Activated T-helper 1 cell treated with anti-CD3 and anti-CD28 coated beads, Interleukin-12 subunit alpha, Interleukin-12 subunit beta, Interleukin-2, Interleukin-4 antibody, amounts not matched to agents 30 ng/mL and 10 ng/mL and 1 ng/mL, durations not matched to agents 14 hours and 24 hours and 36 hours (primary cell): ENCODE measurements at regions of chr10 and their contacts with region 1.

Region 1: DNA sequence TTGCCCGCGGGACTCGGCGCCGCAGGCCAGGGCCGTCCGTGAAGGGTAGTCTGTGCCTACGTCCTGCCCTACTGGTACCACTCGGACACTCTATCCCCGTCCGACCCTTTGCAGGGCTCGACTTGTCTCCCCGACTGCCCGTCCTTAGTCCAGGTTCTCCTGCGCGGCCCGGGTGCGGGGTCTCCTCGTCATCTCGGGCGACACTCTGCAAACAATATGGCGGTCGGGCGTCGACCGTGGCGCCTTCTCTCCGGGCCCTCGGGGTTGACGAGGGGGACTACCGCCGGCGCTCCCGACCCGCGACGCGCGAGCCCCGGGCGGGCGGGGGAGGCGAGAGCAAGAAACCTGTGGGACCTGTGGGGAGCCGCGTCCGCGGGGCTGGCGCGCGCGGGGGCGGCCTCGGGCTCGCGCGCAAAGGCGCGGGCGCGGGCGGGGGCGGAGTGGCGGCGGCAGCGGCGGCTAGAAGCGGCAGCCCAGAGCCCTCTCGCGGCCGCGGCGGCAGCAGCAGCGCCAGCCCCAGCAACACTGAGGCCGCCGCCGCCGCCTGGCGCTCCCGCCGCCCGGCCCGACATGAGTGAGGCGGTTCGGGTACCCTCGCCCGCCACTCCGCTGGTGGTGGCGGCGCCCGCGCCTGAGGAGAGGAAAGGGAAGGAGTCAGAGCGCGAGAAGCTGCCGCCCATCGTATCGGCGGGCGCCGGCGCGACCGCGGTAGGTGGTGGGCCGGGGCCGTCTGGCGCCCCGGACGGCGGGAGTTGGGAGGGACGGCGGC is at the start of gene HECTD2:
- DNase-seq: peak; percentile 75
- H3K4me3 Mint-ChIP-seq: peak within 1 kb of the TSS; percentile 91
- H3K27ac Mint-ChIP-seq: peak within 1 kb of the TSS; percentile 95
- H3K4me1 Mint-ChIP-seq: peaks cover 25% of the 10 kb centered on the region
- H3K27me3 Mint-ChIP-seq: peaks cover 11% of the 10 kb centered on the region
- total RNA-seq, gene HECTD2: 6.2 and 6.4 TPM in 2 replicates

Region 2: DNA sequence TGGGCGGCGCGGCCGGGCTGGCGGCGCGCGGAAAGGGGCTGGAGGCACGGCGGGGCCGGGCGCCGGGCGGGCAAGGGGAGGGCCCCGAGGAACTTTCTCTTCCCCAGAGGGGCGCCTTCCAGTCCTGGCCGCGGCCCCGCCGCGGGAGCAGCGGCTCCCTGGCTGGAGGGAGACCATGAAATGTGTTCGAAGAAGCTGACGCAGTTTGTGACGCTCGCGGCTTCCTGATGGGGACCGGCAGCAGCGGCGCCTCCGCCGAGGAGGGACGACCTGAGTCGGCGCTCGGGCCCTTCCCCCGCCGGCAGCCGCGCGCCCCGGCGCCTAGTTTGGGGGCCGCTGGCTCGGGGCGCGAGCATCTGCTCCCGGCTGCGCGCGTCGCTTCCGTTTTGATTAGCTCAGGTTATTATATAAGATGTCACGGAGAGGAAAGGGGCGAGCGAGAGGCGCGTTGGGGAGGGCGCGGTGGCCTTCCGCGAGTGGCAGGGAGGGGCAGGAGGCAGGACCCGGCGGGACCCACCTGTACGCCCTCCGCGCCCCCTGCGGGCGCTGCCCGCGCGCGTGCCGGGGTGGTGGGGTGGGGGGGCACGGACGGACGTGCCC is 246.7 kb before region 1 on chr10:
- intact Hi-C with region 1: loop called (anchors 2 kb)
- DNase-seq: peak; percentile 66
- H3K4me3 Mint-ChIP-seq: peak overlapping the region; percentile 90
- H3K27ac Mint-ChIP-seq: peak overlapping the region; percentile 90
- H3K4me1 Mint-ChIP-seq: peaks cover 39% of the 10 kb centered on the region
- H3K27me3 Mint-ChIP-seq: peaks cover 12% of the 10 kb centered on the region

Region 3: GRCh38 chr10:91389636-91390512 is 20.2 kb before region 1 on chr10:
- intact Hi-C with region 1: loop called (anchors 1 kb)
- DNase-seq: no peak
- H3K4me3 Mint-ChIP-seq: no peak overlapping the region
- H3K27ac Mint-ChIP-seq: no peak overlapping the region
- H3K4me1 Mint-ChIP-seq: peaks cover 7% of the 10 kb centered on the region
- H3K27me3 Mint-ChIP-seq: peaks cover 16% of the 10 kb centered on the region

Region 4: DNA sequence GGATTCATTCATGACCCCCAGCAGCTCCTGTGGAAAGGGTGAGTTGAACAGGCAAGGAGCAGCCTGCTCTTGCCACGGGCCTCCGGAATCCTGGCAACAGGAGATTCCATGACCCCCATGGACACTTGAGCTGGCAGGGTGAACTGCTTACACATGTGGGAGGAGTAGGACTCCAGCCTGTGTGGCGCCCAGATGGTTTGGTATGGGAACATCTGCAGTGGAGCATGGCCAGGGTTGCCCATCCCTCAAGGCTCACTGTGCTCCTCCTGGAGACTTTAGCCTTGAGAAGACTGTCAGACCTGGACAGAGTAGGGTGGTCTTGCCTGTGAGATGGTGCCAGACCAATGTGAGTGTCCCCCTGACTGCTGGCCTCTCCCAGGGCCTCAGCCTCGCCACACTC is 57.1 kb after region 1 on chr10:
- intact Hi-C with region 1: loop called (anchors 5 kb)
- DNase-seq: no peak
- H3K4me3 Mint-ChIP-seq: no peak overlapping the region
- H3K27ac Mint-ChIP-seq: no peak overlapping the region
- H3K4me1 Mint-ChIP-seq: no peaks in the 10 kb centered on the region
- H3K27me3 Mint-ChIP-seq: no peaks in the 10 kb centered on the region